PC-9 (cell line): ENCODE measurements at regions of chr21 and their contacts with region 1.

Region 1: DNA sequence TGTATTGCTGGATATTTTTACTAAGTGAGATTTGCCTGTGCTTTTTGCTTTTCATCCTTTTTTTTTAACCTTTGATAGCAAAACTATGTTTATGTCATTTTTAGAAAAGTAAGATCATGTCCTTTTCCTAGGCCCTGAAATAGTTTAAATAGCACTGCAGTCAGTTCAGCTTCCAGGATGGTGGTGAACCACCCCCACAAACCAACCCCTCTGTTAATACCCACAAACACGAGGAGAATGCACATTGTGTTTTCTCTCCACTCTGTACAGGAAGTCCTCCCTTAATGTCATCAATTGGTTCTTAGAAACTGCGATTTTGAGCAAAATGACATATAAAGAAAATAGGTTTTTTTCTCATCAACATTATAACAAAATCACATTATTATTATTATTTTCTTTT is 117.7 kb upstream of the DSCAM start:
- DNase-seq: no peak
- H3K4me3 ChIP-seq: no peak overlapping the region
- H3K27ac ChIP-seq: no peak overlapping the region
- H3K4me1 ChIP-seq: no peaks in the 10 kb centered on the region
- H3K27me3 ChIP-seq: no peaks in the 10 kb centered on the region
- CTCF ChIP-seq: no peak

Region 2: GRCh38 chr21:40976198-40977109 is 11.8 kb after region 1 on chr21:
- CTCF ChIA-PET with region 1: no interaction called
- POLR2A ChIA-PET with region 1: interaction called, 21 read pairs
- intact Hi-C with region 1: no loop called
- DNase-seq: no peak
- H3K4me3 ChIP-seq: no peak overlapping the region
- H3K27ac ChIP-seq: no peak overlapping the region
- H3K4me1 ChIP-seq: no peaks in the 10 kb centered on the region
- H3K27me3 ChIP-seq: no peaks in the 10 kb centered on the region
- CTCF ChIP-seq: no peak